MCF 10A (cell line): ENCODE measurements at regions of chr14 and their contacts with region 1.

Region 1: DNA sequence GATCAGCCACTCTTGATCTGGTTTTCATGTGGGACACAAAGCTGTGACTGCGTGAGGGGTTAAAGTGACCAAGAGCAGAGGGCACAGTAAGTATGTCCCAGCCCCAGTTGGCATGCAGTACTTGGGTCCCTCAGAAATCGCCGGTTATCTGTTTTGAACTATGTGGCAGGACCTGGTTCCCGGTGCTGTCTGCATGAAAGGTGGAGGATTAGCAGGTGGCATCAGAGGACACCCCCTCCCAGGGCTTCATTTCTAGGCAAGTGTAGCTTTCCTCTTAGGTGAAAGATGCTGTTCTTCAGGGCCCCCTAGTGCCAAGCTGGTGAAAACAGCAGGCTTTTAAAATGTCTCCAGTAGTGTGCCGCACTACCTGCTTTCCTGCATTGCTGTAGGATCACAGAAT is 57.1 kb downstream of the ATG14 start:
- DNase-seq: peak; percentile 55
- H3K4me3 Mint-ChIP-seq: no peak overlapping the region
- H3K27ac Mint-ChIP-seq: no peak overlapping the region
- H3K4me1 Mint-ChIP-seq: no peaks in the 10 kb centered on the region
- H3K27me3 Mint-ChIP-seq: no peaks in the 10 kb centered on the region
- CTCF ChIP-seq: peak; percentile 58

Region 2: GRCh38 chr14:55212634-55213033 is 141.9 kb before region 1 on chr14:
- CTCF ChIA-PET with region 1: interaction called, 16 read pairs
- POLR2A ChIA-PET with region 1: interaction called, 7 read pairs
- intact Hi-C with region 1: loop called (anchors 1 kb)
- DNase-seq: peak; percentile 82
- H3K4me3 Mint-ChIP-seq: peak overlapping the region; percentile 16
- H3K27ac Mint-ChIP-seq: peak overlapping the region; percentile 87
- H3K4me1 Mint-ChIP-seq: peaks cover 14% of the 10 kb centered on the region
- H3K27me3 Mint-ChIP-seq: no peaks in the 10 kb centered on the region
- CTCF ChIP-seq: no peak

Region 3: GRCh38 chr14:55245657-55246268 is 108.7 kb before region 1 on chr14:
- CTCF ChIA-PET with region 1: interaction called, 17 read pairs
- POLR2A ChIA-PET with region 1: no interaction called
- intact Hi-C with region 1: loop called (anchors 1 kb)
- DNase-seq: peak; percentile 49
- H3K4me3 Mint-ChIP-seq: no peak overlapping the region
- H3K27ac Mint-ChIP-seq: no peak overlapping the region
- H3K4me1 Mint-ChIP-seq: no peaks in the 10 kb centered on the region
- H3K27me3 Mint-ChIP-seq: peaks cover 43% of the 10 kb centered on the region
- CTCF ChIP-seq: peak; percentile 40

Region 4: DNA sequence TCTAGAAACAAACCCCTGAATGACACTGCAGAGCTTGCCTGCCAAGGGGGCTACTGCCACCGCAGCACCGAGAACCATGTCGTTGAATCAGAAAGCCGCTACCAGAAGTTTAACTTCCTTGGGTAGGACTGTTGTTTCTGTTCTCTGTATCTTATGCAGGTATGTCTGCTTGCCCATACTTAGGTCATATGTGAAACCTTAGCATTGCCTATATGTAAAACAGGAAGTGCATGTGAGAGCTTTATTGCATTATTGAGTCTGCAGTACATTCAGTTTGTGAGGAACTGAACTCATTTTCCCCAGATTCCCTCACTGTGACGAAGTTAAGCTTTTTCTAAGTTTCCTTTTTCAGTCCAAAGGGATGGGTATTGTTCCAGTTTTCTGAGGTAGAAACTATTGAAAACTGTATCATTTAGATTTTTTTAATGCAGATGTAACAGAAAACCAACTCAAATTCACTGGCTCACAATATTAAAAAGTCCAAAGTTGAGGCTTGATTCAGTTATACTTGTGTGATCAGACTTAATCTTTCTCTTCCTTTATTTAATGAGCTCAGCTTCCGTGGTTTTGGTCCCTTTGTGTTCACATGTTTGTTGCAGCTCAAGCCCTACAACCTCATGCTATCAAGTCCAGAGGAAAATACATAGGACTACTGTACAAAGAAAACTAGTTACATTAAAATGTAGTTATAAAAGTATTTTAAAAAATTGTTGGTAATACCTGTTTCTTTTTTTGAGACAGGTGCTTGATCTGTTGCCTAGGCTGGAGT is 76.3 kb before region 1 on chr14:
- CTCF ChIA-PET with region 1: interaction called, 10 read pairs
- POLR2A ChIA-PET with region 1: interaction called, 6 read pairs
- intact Hi-C with region 1: no loop called
- DNase-seq: no peak
- H3K4me3 Mint-ChIP-seq: no peak overlapping the region
- H3K27ac Mint-ChIP-seq: no peak overlapping the region
- H3K4me1 Mint-ChIP-seq: peaks cover 16% of the 10 kb centered on the region
- H3K27me3 Mint-ChIP-seq: no peaks in the 10 kb centered on the region
- CTCF ChIP-seq: no peak

Region 5: DNA sequence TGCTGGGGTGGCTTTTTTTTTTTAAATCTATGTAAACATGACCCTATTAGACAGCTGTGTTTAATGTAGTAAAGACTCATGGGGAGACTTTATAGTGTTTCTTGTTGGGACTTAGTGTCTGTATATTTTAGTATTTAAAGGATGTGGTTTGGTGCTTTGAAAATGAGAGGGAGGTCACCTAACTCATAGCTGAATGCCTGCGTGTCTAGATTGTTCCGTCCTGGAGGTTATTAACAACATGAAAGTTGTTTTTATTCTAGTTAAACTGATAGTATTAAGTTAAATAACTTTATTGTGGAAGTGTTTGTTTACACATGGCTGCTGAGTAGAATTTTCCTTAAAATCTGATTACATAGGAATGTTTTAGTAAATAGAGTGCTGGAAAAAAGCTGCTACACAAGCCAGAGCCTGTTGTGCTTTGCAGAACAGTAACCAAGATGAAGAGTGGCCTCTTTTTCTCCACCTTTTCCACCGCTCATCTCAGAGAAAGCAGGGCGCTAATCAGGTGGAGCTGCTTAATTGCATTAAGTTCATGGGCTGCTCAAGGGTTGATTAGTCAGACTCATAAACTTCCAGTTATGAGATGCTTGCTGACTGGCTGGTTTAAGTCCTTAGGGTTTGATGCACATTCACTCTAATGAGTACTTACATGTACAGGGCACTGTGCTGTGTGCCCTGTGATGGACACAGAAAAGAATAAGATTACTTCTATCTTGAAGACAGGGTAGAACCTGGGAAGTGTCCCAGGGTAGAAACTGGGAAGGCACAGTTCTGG is 20.6 kb before region 1 on chr14:
- CTCF ChIA-PET with region 1: interaction called, 11 read pairs
- POLR2A ChIA-PET with region 1: interaction called, 5 read pairs
- intact Hi-C with region 1: no loop called
- DNase-seq: no peak
- H3K4me3 Mint-ChIP-seq: no peak overlapping the region
- H3K27ac Mint-ChIP-seq: peak overlapping the region; percentile 64
- H3K4me1 Mint-ChIP-seq: peaks cover 15% of the 10 kb centered on the region
- H3K27me3 Mint-ChIP-seq: no peaks in the 10 kb centered on the region
- CTCF ChIP-seq: no peak

Region 6: GRCh38 chr14:55373784-55374705 is 19.5 kb after region 1 on chr14:
- CTCF ChIA-PET with region 1: interaction called, 10 read pairs
- POLR2A ChIA-PET with region 1: no interaction called
- intact Hi-C with region 1: no loop called
- DNase-seq: peak; percentile 38
- H3K4me3 Mint-ChIP-seq: no peak overlapping the region
- H3K27ac Mint-ChIP-seq: no peak overlapping the region
- H3K4me1 Mint-ChIP-seq: no peaks in the 10 kb centered on the region
- H3K27me3 Mint-ChIP-seq: no peaks in the 10 kb centered on the region
- CTCF ChIP-seq: no peak

Region 7: GRCh38 chr14:55430024-55430690 is 75.7 kb after region 1 on chr14:
- CTCF ChIA-PET with region 1: no interaction called
- POLR2A ChIA-PET with region 1: interaction called, 3 read pairs
- intact Hi-C with region 1: loop called (anchors 2 kb)
- DNase-seq: peak; percentile 87
- H3K4me3 Mint-ChIP-seq: no peak overlapping the region
- H3K27ac Mint-ChIP-seq: peak overlapping the region; percentile 46
- H3K4me1 Mint-ChIP-seq: peaks cover 16% of the 10 kb centered on the region
- H3K27me3 Mint-ChIP-seq: no peaks in the 10 kb centered on the region
- CTCF ChIP-seq: peak; percentile 42

Region 8: DNA sequence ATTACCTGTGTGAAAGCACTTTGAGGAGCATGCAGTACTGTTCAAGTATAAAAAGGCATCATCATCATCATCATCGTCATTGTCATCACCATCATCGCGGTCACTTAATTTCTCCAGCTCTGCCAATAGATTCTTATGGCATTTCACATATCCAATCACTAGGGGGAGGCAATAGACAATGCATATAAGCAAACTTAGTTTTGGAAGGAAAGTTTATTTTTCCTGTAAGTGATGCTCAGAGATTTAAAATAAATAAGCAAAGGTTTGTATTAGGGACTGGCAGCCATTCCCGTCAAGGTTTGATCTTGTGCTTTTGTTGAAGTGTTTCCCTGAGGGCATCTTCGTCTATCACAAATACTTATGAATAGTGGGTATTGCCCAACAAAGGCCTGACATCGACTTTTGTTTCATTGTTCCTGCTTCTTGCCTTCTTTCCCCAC is 352.9 kb after region 1 on chr14:
- CTCF ChIA-PET with region 1: no interaction called
- POLR2A ChIA-PET with region 1: no interaction called
- intact Hi-C with region 1: no loop called
- DNase-seq: peak; percentile 50
- H3K4me3 Mint-ChIP-seq: no peak overlapping the region
- H3K27ac Mint-ChIP-seq: no peak overlapping the region
- H3K4me1 Mint-ChIP-seq: peaks cover 25% of the 10 kb centered on the region
- H3K27me3 Mint-ChIP-seq: no peaks in the 10 kb centered on the region
- CTCF ChIP-seq: peak; percentile 58